PC-9 (cell line): ENCODE measurements at regions of chr6 and their contacts with region 1.

Region 1: GRCh38 chr6:9948678-9949077 is 466.2 kb downstream of the TFAP2A start:
- DNase-seq: no peak
- H3K4me3 ChIP-seq: no peak overlapping the region
- H3K27ac ChIP-seq: no peak overlapping the region
- H3K4me1 ChIP-seq: no peaks in the 10 kb centered on the region
- H3K27me3 ChIP-seq: no peaks in the 10 kb centered on the region
- CTCF ChIP-seq: no peak

Region 2: DNA sequence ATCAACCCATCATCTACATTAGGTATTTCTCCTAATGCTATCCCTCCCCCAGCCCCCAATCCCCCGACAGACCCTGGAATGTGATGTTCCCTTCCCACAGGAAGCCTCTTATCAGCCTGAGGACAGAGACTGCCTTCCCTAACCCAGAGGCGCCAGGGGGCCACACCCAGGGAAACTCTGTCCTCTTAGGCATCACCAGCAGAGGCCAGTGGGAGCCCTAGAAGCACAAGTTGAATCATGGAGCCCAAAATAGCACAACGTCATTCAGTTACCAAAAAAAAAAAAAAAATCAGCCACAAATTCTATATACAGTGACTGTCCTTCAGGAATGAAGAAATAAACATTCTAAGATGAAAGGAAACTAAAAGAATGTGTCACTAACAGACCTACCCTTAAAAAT is 159.5 kb before region 1 on chr6:
- CTCF ChIA-PET with region 1: no interaction called
- POLR2A ChIA-PET with region 1: interaction called, 13 read pairs
- intact Hi-C with region 1: no loop called
- DNase-seq: no peak
- H3K4me3 ChIP-seq: no peak overlapping the region
- H3K27ac ChIP-seq: no peak overlapping the region
- H3K4me1 ChIP-seq: no peaks in the 10 kb centered on the region
- H3K27me3 ChIP-seq: no peaks in the 10 kb centered on the region
- CTCF ChIP-seq: no peak